Activated CD4-positive, alpha-beta memory T cell treated with anti-CD3 and anti-CD28 coated beads for 36 hours (primary cell): ENCODE measurements at regions of chr14 and their contacts with region 1.

Region 1: GRCh38 chr14:32252030-32252670 is 49.1 kb upstream of the RNU6-8 start:
- DNase-seq: peak; percentile 50
- H3K4me3 Mint-ChIP-seq: no peak overlapping the region
- H3K27ac Mint-ChIP-seq: no peak overlapping the region
- H3K4me1 Mint-ChIP-seq: no peaks in the 10 kb centered on the region
- H3K27me3 Mint-ChIP-seq: no peaks in the 10 kb centered on the region

Region 2: DNA sequence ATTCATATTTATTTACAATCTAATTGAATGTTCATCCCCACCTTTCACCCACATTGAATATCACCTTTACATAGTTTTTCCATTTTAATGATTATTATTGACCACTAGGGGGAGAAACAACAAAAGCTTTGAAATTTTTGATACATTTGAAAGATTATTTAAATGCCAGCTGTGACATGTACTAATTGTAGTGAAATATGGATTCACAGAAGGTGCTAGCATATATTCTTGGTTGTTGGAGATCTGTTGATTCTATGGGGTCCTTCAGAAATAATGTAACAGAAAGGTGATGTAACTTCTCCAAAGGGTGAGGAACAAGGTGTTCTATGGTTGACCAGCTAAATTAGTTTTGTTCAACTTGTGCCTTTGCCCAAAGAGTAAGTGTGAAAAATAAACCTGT is 741.9 kb before region 1 on chr14:
- CTCF ChIA-PET with region 1: interaction called, 30 read pairs
- POLR2A ChIA-PET with region 1: no interaction called
- intact Hi-C with region 1: loop called (anchors 1 kb)
- DNase-seq: no peak
- H3K4me3 Mint-ChIP-seq: no peak overlapping the region
- H3K27ac Mint-ChIP-seq: no peak overlapping the region
- H3K4me1 Mint-ChIP-seq: no peaks in the 10 kb centered on the region
- H3K27me3 Mint-ChIP-seq: no peaks in the 10 kb centered on the region

Region 3: DNA sequence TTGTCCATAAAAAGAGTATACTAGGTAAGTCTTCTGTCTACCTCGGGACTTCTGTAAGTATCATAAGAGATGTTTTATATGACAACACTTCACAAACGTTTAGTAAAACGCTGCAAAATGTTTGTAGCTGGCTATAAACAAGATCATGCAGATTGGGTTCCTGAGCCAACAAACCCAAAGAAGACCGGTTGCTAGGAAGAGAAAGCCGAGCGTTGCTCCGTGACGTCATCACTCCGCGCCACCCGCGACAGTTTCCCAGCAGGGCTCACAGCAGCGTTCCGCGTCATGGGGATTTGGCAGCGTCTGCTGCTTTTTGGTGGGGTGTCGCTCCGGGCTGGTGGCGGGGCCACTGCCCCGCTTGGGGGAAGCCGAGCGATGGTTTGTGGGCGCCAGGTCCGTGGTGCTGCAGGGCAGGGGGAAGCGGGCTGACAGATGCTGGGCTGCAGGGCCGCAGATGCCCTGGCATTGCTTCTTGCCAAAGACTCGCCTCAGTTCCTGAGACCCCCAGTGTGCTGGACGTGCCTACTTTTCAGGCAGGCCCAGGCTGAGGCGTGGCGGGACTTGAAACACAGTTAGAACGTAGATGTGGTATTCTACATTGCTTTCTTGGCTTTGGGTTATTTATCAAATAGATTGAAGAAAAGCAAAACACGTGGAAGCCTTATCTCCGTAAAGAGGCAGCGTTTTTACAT is 690.8 kb before region 1 on chr14 and contains the start of gene NUBPL:
- CTCF ChIA-PET with region 1: no interaction called
- POLR2A ChIA-PET with region 1: no interaction called
- intact Hi-C with region 1: loop called (anchors 5 kb)
- DNase-seq: peak; percentile 98
- H3K4me3 Mint-ChIP-seq: peak within 1 kb of the TSS; percentile 95
- H3K27ac Mint-ChIP-seq: peak within 1 kb of the TSS; percentile 93
- H3K4me1 Mint-ChIP-seq: peaks cover 20% of the 10 kb centered on the region
- H3K27me3 Mint-ChIP-seq: peaks cover 1% of the 10 kb centered on the region
- total RNA-seq, gene NUBPL: 6.9 to 9.1 TPM

Region 4: GRCh38 chr14:31843361-31844091 is 408.6 kb before region 1 on chr14:
- CTCF ChIA-PET with region 1: no interaction called
- POLR2A ChIA-PET with region 1: no interaction called
- intact Hi-C with region 1: no loop called
- DNase-seq: no peak
- H3K4me3 Mint-ChIP-seq: no peak overlapping the region
- H3K27ac Mint-ChIP-seq: no peak overlapping the region
- H3K4me1 Mint-ChIP-seq: no peaks in the 10 kb centered on the region
- H3K27me3 Mint-ChIP-seq: no peaks in the 10 kb centered on the region

Region 5: GRCh38 chr14:31926123-31926522 is 326.0 kb before region 1 on chr14:
- CTCF ChIA-PET with region 1: interaction called, 123 read pairs
- POLR2A ChIA-PET with region 1: no interaction called
- intact Hi-C with region 1: loop called (anchors 1 kb)
- DNase-seq: peak; percentile 21
- H3K4me3 Mint-ChIP-seq: no peak overlapping the region
- H3K27ac Mint-ChIP-seq: no peak overlapping the region
- H3K4me1 Mint-ChIP-seq: peaks cover 17% of the 10 kb centered on the region
- H3K27me3 Mint-ChIP-seq: no peaks in the 10 kb centered on the region

Region 6: DNA sequence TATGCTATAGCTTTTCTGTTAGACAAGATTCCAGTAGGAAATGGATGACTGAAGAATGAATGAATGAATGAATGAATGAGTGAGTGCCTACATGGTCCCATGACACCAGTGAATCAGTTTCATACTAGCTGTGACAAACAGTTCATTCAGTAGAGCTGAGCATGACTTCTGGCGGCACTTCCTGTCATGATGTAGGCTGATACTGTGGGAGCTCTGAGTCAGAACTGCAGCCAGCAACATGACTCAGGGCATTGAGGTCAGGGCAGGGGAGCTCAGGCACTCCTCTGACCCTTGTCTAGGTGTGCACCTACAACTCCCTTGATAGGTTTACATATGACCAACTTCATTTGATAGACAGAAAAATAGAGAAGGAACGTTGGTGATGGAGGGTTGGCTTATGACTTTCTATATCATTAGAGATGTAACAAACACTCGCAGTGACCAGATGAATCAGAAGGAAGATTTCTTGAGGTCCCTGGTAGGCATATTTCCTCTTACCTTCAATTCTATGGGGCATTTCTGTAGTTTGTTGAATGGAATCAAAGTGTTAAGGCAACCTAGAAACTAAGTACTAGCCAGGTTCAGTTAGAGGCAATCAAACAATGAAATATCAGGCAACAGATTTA is 314.3 kb before region 1 on chr14:
- CTCF ChIA-PET with region 1: interaction called, 6 read pairs
- POLR2A ChIA-PET with region 1: no interaction called
- intact Hi-C with region 1: loop called (anchors 1 kb)
- DNase-seq: peak; percentile 91
- H3K4me3 Mint-ChIP-seq: peak overlapping the region; percentile 16
- H3K27ac Mint-ChIP-seq: peak overlapping the region; percentile 80
- H3K4me1 Mint-ChIP-seq: peaks cover 25% of the 10 kb centered on the region
- H3K27me3 Mint-ChIP-seq: no peaks in the 10 kb centered on the region

Region 7: DNA sequence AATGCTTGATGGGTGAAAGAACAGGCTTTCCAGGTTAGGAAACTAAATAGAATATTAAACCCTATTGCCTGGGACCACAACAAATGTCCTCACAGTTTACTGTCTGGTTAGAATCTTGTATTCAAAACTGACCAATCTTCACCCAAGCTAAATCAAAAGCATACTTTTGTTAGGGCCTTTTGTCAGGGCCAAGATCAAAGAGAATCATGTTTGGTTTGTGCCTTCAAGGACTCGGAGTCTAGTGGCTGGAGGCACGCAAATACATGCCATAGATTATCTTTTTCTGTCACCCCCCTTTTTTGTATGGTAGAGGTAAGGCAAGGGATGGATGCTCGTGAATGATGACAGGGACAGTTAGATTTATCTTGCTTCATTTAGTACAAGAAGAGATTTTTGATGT is 25.8 kb after region 1 on chr14:
- CTCF ChIA-PET with region 1: no interaction called
- POLR2A ChIA-PET with region 1: no interaction called
- intact Hi-C with region 1: no loop called
- DNase-seq: no peak
- H3K4me3 Mint-ChIP-seq: no peak overlapping the region
- H3K27ac Mint-ChIP-seq: no peak overlapping the region
- H3K4me1 Mint-ChIP-seq: no peaks in the 10 kb centered on the region
- H3K27me3 Mint-ChIP-seq: peaks cover 3% of the 10 kb centered on the region

Region 8: DNA sequence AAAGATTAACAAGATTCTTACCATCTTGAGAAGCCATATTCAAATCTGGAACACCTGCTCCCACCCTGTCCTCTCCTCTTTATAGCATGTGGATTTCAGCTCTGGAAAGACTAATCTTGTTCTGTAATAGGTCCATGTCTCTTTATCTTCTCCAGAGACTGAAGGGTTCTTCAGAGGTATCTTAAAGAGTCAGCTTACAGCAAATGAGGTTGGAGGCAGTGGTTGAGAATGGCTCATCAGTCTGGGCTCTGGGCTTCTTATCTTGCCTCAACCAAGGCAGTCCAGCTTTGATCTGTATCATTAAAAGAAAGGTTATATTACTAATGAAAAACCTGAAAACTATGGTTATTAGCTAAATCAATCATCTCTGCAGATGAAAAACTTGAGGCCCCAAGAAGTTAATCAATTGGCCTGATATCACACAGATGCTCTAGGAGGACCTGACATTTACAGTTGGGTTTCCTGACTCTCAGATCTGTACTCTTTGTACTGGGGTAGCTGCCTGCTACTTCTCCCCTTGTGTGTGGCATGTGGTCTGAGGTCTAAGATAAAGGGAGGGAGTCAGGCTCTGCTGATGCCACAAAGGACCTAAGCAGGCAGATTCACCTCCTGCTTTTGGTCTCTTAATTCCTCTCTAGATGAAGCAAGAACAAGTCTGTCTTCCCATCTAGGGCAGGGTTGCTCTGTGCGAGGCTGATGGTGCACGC is 75.3 kb after region 1 on chr14:
- CTCF ChIA-PET with region 1: no interaction called
- POLR2A ChIA-PET with region 1: no interaction called
- intact Hi-C with region 1: no loop called
- DNase-seq: no peak
- H3K4me3 Mint-ChIP-seq: no peak overlapping the region
- H3K27ac Mint-ChIP-seq: no peak overlapping the region
- H3K4me1 Mint-ChIP-seq: peaks cover 3% of the 10 kb centered on the region
- H3K27me3 Mint-ChIP-seq: no peaks in the 10 kb centered on the region

Region 9: GRCh38 chr14:32469388-32470160 is 217.4 kb after region 1 on chr14:
- CTCF ChIA-PET with region 1: interaction called, 3 read pairs
- POLR2A ChIA-PET with region 1: no interaction called
- intact Hi-C with region 1: loop called (anchors 1 kb)
- DNase-seq: no peak
- H3K4me3 Mint-ChIP-seq: no peak overlapping the region
- H3K27ac Mint-ChIP-seq: no peak overlapping the region
- H3K4me1 Mint-ChIP-seq: no peaks in the 10 kb centered on the region
- H3K27me3 Mint-ChIP-seq: no peaks in the 10 kb centered on the region

Region 10: DNA sequence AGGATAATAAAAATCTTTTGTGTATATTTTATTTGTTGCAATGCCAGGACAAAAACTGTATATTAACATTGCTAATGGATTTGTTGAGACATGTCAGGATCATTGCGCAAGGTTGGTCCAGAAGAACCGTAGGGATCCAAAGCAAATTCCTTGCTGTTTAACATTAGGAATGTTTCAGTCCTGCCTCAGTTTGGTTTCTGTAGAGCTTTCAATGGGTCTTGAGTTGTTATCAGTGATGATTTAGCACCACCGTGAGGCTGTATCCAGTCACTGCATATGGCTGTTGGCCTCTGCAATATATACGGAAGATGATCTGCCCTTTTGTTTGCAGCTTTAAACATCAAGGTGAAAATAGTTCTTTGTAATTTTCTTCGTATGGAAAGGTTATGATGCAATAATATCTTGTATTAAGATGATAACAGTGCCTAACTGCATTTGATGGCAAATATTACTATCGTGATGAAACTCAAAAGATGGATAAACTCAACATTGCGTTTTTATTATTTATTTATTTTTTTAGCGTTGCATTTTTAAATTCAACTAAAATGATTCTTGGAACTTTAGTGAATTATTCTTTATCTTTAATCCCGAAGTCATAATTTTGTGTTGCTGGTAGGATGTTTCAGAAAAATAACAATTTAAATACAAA is 308.2 kb after region 1 on chr14:
- CTCF ChIA-PET with region 1: interaction called, 6 read pairs
- POLR2A ChIA-PET with region 1: no interaction called
- intact Hi-C with region 1: loop called (anchors 1 kb)
- DNase-seq: peak; percentile 40
- H3K4me3 Mint-ChIP-seq: no peak overlapping the region
- H3K27ac Mint-ChIP-seq: no peak overlapping the region
- H3K4me1 Mint-ChIP-seq: peaks cover 12% of the 10 kb centered on the region
- H3K27me3 Mint-ChIP-seq: no peaks in the 10 kb centered on the region